Ascending aorta (tissue), 2 donors: ENCODE measurements at regions of chr7 and their contacts with region 1.

Region 1: DNA sequence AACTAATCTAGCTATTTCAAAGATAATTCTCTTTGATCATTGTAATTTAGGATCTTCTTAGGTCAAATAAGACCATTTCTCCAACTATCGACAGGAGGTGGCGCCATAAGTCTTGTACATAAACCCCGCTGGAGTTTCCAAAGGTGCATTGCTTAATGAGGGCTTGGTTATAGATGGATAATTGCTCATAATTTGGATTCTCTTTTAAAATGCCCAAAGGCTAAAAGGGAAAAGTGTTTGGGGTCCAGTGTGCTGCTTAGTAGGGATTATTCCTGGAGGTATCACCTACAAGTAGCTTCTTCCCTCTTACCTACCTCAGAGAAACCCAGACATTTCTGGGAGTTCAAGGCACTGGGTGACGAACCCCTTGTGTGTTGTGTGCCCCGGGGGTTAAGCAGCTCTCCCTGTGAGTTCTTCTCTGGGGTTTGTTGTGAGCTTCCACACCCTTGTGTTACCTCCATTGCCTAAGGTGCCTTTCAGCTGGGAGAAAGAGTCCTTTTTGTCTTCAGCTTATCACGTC is 75.2 kb downstream of the PAXIP1 start:
- DNase-seq: peak in 1 of 2 donors; percentile 91
- H3K4me3 ChIP-seq: peak overlapping the region; percentile 67 to 88
- H3K27ac ChIP-seq: peak overlapping the region; percentile 75 to 85
- H3K4me1 ChIP-seq: peaks cover 0 to 6% of the 10 kb centered on the region in 2 donors
- H3K27me3 ChIP-seq: no peaks in the 10 kb centered on the region
- CTCF ChIP-seq: peak; percentile 50 to 74 (median 50)

Region 2: GRCh38 chr7:154968336-154969001 is 40.8 kb after region 1 on chr7:
- intact Hi-C with region 1: no loop called
- DNase-seq: no peak
- H3K4me3 ChIP-seq: no peak overlapping the region
- H3K27ac ChIP-seq: no peak overlapping the region
- H3K4me1 ChIP-seq: no peaks in the 10 kb centered on the region
- H3K27me3 ChIP-seq: no peaks in the 10 kb centered on the region
- CTCF ChIP-seq: no peak

Region 3: DNA sequence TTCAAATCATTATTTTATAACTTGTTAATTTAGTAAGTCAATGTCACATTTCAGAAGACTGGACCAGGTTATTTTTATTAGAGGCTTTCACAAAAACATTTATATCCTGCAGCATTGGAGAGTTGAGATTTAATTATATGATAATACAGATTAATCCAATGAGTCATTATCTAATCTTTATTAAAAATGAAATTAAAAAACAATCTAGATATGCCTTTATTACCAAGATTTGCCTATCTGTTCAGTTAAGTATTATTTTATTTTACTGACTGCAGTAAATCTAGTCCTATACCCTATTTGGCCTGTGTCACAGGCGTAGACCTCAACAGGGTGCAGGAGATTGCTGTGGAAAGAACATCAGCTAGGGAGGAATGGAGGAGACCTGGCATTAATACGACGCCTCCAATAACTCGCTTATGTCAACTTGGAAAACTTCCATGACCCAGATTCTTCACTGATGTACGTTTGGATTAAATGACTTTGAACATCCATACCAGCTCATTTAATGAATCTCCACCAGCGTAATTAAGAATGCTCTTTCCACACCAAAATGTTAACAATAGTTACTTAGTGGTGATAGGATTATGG is 57.0 kb after region 1 on chr7:
- intact Hi-C with region 1: no loop called
- DNase-seq: no peak
- H3K4me3 ChIP-seq: no peak overlapping the region
- H3K27ac ChIP-seq: no peak overlapping the region
- H3K4me1 ChIP-seq: no peaks in the 10 kb centered on the region
- H3K27me3 ChIP-seq: no peaks in the 10 kb centered on the region
- CTCF ChIP-seq: no peak

Region 4: GRCh38 chr7:155003376-155004214 is 75.9 kb after region 1 on chr7:
- intact Hi-C with region 1: loop called (anchors 1 kb)
- DNase-seq: peak; percentile 18 to 85
- H3K4me3 ChIP-seq: peak overlapping the region; percentile 80 to 91
- H3K27ac ChIP-seq: peak overlapping the region; percentile 78 to 84
- H3K4me1 ChIP-seq: no peaks in the 10 kb centered on the region
- H3K27me3 ChIP-seq: no peaks in the 10 kb centered on the region
- CTCF ChIP-seq: no peak

Region 5: DNA sequence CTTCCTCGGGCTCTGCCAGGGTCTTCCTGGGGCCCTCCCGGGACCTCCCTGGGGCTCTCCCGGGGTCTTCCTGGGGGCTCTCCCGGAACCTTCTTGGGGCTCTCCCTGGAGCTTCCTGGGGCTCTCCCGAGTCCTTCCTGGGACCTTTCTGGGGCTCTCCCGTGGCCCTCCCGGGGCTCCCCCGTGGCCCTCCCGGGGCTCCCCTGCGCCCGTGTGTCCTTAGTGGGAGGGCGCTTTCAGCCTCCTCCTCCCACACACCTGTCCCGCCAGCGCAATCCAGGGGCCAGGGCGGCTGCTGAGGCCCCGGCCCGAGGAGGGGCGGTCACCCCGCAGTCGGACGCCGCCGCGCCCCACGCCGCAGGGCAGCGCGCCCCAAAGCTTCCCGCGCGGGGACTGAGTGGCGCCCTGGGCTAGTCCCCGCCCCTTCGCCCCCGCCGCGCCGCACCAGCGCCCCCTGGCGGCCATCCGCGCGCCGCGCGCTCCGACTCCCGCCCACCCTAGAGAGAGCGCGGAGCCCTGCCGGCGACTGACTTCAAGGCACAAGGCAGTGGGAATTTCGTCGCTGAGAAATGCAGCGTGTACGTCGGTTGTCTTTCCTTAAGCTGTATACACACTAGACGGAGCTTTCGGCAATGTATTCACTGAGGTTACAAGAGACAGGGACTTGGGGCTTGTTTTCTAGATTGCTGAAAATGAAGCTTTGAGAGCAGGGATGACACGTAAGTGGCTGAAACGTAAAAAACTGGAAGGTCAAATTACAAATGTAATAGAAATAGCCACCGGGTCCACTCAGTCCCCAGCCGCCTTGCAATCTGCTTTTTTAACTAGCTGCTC is 417.1 kb after region 1 on chr7:
- intact Hi-C with region 1: loop called (anchors 1 kb)
- DNase-seq: peak in 1 of 2 donors; percentile 87
- H3K4me3 ChIP-seq: peak overlapping the region; percentile 27 to 60
- H3K27ac ChIP-seq: no peak overlapping the region
- H3K4me1 ChIP-seq: peaks cover 0 to 4% of the 10 kb centered on the region in 2 donors
- H3K27me3 ChIP-seq: no peaks in the 10 kb centered on the region
- CTCF ChIP-seq: peak; percentile 52 to 93 (median 81)

Region 6: DNA sequence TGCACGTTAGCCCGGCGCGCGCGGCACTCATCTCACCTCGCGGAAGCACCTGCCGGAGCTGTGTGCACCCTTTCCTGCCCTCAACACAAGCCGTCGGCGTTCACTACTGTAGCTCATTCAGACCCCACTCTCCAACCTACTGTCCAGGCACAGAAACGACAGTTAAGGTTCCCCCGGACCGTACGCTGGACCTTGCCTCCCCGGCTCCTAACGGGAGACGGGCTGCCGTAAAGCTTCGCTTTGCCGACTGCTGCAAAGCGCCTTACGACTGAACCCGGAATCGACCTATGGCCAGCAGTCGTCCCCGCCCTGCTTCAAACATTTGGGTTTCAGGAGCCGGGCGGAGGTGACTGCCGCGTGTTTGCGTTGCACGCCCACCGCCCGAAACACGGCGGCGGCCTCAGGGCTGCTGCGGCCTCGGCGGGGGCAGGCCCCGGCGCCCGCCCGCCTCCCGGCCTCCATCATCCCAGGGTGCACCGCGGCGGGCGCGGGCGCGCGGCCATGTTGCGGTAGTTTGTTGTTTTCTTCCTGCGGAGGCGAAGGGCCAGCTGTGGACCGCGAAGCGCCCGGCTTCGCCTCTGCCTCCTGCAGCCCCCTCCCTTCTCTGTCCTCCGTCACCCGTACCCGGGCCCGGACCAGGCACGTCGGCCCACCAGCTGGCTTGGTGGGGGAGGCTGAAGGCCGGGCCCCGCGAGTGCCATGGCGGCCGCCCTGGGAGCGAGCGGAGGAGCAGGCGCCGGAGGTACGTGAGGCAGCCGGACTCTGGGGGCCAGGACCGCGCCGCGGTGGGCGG is 716.7 kb after region 1 on chr7 and contains the start of gene RBM33:
- intact Hi-C with region 1: loop called (anchors 10 kb)
- DNase-seq: peak in 1 of 2 donors; percentile 80
- H3K4me3 ChIP-seq: peak within 1 kb of the TSS; percentile 93 to 100
- H3K27ac ChIP-seq: peak within 1 kb of the TSS; percentile 94
- H3K4me1 ChIP-seq: peaks cover 0 to 13% of the 10 kb centered on the region in 2 donors
- H3K27me3 ChIP-seq: no peaks in the 10 kb centered on the region
- CTCF ChIP-seq: no peak
- total RNA-seq, gene RBM33: 44.2 TPM

Region 7: GRCh38 chr7:155763691-155764437 is 836.2 kb after region 1 on chr7:
- intact Hi-C with region 1: loop called (anchors 10 kb)
- DNase-seq: no peak
- H3K4me3 ChIP-seq: no peak overlapping the region
- H3K27ac ChIP-seq: no peak overlapping the region
- H3K4me1 ChIP-seq: no peaks in the 10 kb centered on the region
- H3K27me3 ChIP-seq: no peaks in the 10 kb centered on the region
- CTCF ChIP-seq: no peak